ENCODE measurements at regions of chr12 and their contacts with region 1.

Region 1: DNA sequence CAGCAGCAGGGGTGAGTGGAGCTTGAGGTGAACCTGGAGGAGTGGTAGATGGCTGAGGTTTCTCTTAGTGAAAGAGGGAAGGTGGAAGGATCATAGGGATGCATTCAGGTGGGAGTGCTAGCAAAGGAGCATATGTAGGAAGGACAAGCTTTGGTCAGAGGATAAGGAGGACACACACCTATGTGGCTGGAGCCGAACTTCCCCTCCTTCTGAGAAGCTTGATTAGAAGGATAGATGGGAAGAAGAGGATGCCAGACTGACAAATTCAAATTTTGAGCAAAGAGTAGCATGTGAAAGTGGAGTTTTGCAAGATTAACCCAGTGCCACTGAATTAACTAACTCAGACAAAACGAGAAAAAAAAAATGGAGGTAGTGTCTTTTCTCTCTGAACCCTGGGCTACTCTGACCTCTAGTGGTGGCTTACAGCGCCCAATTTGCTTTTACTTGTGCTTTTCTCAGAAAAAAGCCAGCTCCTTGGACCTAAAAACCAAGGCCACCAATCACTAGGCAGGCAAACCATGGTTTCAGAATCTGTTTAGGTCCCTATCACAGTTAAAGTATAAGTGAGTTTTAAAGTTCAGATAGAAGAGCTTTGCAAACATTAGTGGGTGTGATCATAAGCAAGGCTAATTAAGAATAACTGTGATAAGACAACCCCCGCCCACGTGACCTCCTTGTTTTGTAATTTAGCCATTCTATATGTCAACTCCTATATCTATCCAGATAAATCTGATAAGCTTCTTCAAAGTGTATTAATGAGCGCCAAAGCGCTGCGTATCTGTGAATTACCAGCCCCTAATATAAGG is 15.5 kb downstream of the EMP1 start:
- DNase-seq: peak; percentile 63
- CTCF ChIP-seq: peak; percentile 73

Region 2: GRCh38 chr12:12786716-12787601 is 425.1 kb before region 1 on chr12:
- in situ Hi-C with region 1: loop called (anchors 25 kb)
- DNase-seq: peak; percentile 96
- CTCF ChIP-seq: no peak

Region 3: DNA sequence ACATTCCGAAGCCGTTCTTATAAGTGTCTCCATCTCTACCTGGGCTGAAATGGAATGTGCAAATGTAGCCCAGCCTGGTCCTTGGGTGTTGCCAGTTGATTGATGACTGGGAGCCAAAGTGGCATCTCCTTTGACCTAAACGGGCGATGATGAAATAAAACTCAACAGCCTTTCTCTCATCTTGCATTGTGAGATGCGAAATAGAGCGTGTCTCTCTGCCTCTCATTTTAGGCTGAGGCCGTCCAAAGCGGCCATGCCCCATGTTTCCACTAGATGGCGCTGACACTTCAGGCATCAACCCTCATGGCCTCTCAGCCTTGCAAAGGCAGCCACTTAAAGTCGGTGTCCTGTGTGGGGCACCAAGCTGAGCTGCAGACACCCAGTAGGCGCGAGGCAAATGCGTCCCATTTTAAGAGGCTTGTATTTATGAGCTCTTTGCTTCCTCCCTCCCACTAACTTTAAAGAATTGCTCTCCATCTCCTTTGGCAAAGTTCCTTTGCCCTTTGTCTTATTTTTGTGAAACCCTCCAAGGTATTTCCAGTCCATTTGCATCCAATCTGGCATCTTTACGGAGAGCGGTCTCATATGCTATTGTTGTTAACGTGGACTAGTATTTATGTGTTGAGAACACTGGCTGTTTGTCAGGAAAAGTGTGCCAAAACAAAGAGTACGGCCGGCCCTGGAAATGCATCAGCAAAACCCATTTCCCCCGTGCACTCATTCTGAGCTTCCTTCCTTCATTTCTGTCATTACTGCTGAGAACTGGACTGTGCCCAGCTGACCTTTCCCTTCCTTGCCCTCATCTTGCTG is 295.7 kb before region 1 on chr12:
- in situ Hi-C with region 1: loop called (anchors 10 kb)
- DNase-seq: peak; percentile 82
- CTCF ChIP-seq: peak; percentile 98

Region 4: DNA sequence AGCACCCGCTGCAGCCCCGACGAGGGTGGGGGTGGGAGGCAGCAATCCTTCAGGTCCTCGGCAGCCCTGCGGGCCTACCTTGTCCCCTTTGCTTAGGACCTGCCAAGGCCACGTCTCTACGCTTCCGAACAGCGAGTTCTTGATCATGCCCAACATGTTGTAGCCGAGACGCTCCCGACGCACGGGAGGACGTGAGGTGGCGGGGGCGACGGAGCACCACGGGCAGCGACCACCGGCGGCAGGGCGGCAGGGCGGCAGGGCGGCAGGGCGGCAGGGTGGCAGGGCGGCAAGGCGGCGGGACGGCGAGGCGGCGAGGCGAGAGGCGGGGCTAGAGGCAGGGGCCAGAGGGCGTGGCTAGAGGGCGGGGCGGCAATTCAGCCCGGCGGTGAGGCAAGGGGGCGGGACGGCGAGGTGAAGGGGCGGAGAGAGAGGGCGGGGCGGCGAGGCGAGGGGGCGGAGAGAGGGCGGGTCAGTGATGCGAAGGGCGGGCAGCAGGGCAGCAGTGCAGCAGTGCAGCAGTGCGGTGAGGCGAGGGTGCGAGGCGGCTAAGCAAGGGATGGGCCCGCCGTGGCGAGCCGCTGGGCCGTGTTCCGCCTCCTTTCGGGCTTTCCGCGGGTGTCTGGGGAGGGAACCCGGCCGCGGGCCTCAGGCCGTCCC is 212.0 kb before region 1 on chr12 and contains the start of gene HEBP1:
- in situ Hi-C with region 1: loop called (anchors 25 kb)
- DNase-seq: peak; percentile 99
- CTCF ChIP-seq: no peak

Region 5: GRCh38 chr12:13691598-13691997 is 479.5 kb after region 1 on chr12:
- in situ Hi-C with region 1: no loop called
- DNase-seq: no peak
- CTCF ChIP-seq: no peak

Region 6: GRCh38 chr12:14129611-14130195 is 917.6 kb after region 1 on chr12:
- in situ Hi-C with region 1: no loop called
- DNase-seq: no peak
- CTCF ChIP-seq: no peak